Gastrocnemius medialis (tissue), 4 donors: ENCODE measurements at regions of chr21 and their contacts with region 1.

Region 1: GRCh38 chr21:32412162-32413014 is at the start of gene EVA1C:
- DNase-seq: peak; percentile 30 to 39
- ATAC-seq: peak; percentile 55 to 63
- H3K4me3 ChIP-seq: peak within 1 kb of the TSS; percentile 79 to 92 (median 89)
- H3K27ac ChIP-seq: peak within 1 kb of the TSS; percentile 85 to 96 (median 94)
- H3K4me1 ChIP-seq: peaks cover 0 to 9% of the 10 kb centered on the region in 2 donors
- H3K27me3 ChIP-seq: no peaks in the 10 kb centered on the region
- CTCF ChIP-seq: peak in 4 of 5 experiments; percentile 24 to 54 (median 34)
- POLR2A ChIP-seq: peak; percentile 41 to 72
- total RNA-seq, gene EVA1C: 9.2 to 15.8 (median 12.1) TPM

Region 2: GRCh38 chr21:32457360-32457840 is 45.0 kb after region 1 on chr21:
- in situ Hi-C with region 1: no loop called
- intact Hi-C with region 1: loop called (anchors 2 kb)
- DNase-seq: no peak
- ATAC-seq: no peak
- H3K4me3 ChIP-seq: no peak overlapping the region
- H3K27ac ChIP-seq: peak overlapping the region; percentile 21 to 68 (median 54)
- H3K4me1 ChIP-seq: peaks cover 10 to 11% of the 10 kb centered on the region in 2 donors
- H3K27me3 ChIP-seq: no peaks in the 10 kb centered on the region
- CTCF ChIP-seq: no peak
- POLR2A ChIP-seq: no peak

Region 3: GRCh38 chr21:32520875-32521735 is 108.7 kb after region 1 on chr21:
- in situ Hi-C with region 1: no loop called
- intact Hi-C with region 1: loop called (anchors 5 kb)
- DNase-seq: peak; percentile 41 to 60
- ATAC-seq: peak; percentile 65 to 68
- H3K4me3 ChIP-seq: no peak overlapping the region
- H3K27ac ChIP-seq: peak overlapping the region; percentile 68 to 81 (median 72)
- H3K4me1 ChIP-seq: peaks cover 0 to 16% of the 10 kb centered on the region in 2 donors
- H3K27me3 ChIP-seq: no peaks in the 10 kb centered on the region
- CTCF ChIP-seq: no peak
- POLR2A ChIP-seq: no peak

Region 4: GRCh38 chr21:32569261-32570230 is 157.2 kb after region 1 on chr21:
- in situ Hi-C with region 1: loop called (anchors 10 kb)
- intact Hi-C with region 1: loop called (anchors 2 kb)
- DNase-seq: peak; percentile 35 to 44
- ATAC-seq: peak; percentile 93
- H3K4me3 ChIP-seq: peak overlapping the region; percentile 58 to 84 (median 72)
- H3K27ac ChIP-seq: peak overlapping the region; percentile 57 to 76 (median 66)
- H3K4me1 ChIP-seq: peaks cover 4 to 5% of the 10 kb centered on the region in 2 donors
- H3K27me3 ChIP-seq: no peaks in the 10 kb centered on the region
- CTCF ChIP-seq: peak; percentile 55 to 80 (median 62)
- POLR2A ChIP-seq: no peak

Region 5: DNA sequence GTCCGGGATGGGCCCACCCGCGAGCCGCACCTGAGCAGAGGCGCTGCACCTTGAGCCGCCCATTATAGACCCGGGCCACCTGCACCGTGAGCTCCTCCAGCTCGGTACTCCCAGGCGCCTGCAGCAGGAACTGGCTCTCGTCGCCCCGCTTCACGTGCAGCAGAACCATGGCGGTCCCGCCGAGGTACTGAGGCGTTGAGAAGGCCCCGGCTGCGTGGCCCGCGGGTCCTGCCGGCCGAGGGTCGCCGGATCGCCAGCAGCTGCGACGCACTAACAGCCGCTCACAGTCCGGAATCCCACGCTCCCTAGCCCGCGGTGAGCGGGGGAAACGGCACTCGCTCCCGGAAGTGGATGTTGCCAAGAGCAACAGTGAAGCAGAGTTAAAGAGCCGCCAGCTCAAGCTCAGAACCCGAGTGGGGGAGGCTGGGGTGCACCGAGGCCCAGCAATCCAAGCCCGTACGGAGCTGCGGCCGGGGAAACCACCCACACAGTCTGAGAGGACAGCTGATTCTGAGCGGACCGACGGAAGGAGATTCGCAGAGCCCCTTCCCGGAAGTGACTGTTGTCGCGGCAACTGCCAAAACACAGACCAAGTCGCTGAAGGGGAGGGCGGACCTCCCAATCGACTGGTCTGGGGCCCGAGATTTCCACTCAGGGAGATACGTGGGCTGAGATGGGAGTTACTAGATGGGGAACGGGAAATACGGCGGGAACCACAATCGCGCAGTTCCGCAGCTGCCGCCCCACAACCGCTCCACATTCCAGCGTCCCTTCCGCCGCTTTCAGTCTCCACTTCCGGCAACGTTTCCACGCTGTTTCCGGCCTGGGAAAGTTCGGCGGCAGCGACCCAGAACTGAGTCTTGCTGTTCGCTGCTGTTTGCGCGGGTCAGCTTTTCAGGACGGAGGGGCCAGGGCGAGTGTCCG is 199.9 kb after region 1 on chr21 and contains the start of gene CFAP298:
- in situ Hi-C with region 1: no loop called
- intact Hi-C with region 1: loop called (anchors 5 kb)
- DNase-seq: peak; percentile 75 to 86
- ATAC-seq: peak; percentile 95 to 97
- H3K4me3 ChIP-seq: peak within 1 kb of the TSS; percentile 70 to 100 (median 90)
- H3K27ac ChIP-seq: peak within 1 kb of the TSS; percentile 81 to 93 (median 88)
- H3K4me1 ChIP-seq: peaks cover 6 to 15% of the 10 kb centered on the region in 2 donors
- H3K27me3 ChIP-seq: no peaks in the 10 kb centered on the region
- CTCF ChIP-seq: no peak
- POLR2A ChIP-seq: no peak
- total RNA-seq, gene CFAP298: 21.4 to 45.6 (median 38.2) TPM